ENCODE measurements at regions of chr9 and their contacts with region 1.

Region 1: DNA sequence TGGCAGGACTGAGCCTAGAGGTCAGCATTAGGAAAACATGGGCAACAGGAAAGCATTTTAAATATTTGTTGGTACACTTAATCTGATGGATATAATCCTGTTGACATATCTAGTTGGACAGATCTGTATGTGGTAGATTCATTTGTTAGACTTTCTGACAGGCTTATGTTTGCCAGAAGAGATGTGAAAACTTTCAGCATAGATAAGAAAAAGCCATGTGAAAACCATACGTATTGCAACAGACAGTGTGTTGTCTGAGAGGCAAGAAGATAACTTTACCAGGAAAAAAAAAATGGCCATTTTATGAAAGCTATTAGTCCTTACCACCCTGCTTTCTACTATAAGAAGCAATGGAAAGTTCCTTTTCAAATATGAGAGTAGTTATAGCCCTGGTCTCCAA is 1902.2 kb upstream of the C9orf72 start:
- DNase-seq: no peak
- ATAC-seq: no peak
- H3K4me3 ChIP-seq: no peak overlapping the region
- H3K4me3 Mint-ChIP-seq: no peak overlapping the region
- H3K27ac ChIP-seq: no peak overlapping the region
- H3K27ac Mint-ChIP-seq: no peak overlapping the region
- H3K4me1 ChIP-seq: no peaks in the 10 kb centered on the region
- H3K4me1 Mint-ChIP-seq: no peaks in the 10 kb centered on the region
- H3K27me3 ChIP-seq: no peaks in the 10 kb centered on the region
- H3K27me3 Mint-ChIP-seq: no peaks in the 10 kb centered on the region

Region 2: DNA sequence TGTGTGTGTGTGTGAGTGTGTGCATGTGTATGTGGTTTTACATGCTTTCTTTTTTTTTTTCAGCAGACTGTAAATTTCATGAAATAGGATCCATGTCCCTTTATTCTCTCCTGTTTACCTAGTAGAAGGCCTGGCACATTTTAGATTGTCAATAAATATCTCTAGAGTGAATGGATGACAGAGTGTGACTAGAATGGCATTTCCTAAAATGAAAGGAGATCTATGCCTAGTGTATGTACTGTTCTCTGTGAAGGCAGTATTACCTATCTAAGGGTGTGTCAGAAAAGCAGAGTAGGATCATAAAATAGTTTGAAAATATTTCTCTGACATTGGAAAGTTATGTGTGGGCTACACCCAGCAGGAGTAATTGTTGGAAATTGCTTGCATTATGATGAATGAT is 26.2 kb before region 1 on chr9:
- CTCF ChIA-PET with region 1: no interaction called
- POLR2A ChIA-PET with region 1: no interaction called
- intact Hi-C with region 1: loop called in 1 of 2 experiments (anchors 5 kb)
- DNase-seq: no peak
- ATAC-seq: no peak
- H3K4me3 ChIP-seq: no peak overlapping the region
- H3K4me3 Mint-ChIP-seq: no peak overlapping the region
- H3K27ac ChIP-seq: no peak overlapping the region
- H3K27ac Mint-ChIP-seq: no peak overlapping the region
- H3K4me1 ChIP-seq: no peaks in the 10 kb centered on the region
- H3K4me1 Mint-ChIP-seq: no peaks in the 10 kb centered on the region
- H3K27me3 ChIP-seq: no peaks in the 10 kb centered on the region
- H3K27me3 Mint-ChIP-seq: no peaks in the 10 kb centered on the region

Measured in naive thymus-derived CD4-positive, alpha-beta T cell (primary cell).